ENCODE measurements at regions of chr5 and their contacts with region 1.

Region 1: GRCh38 chr5:127290946-127291693 is 524 bp downstream of the MEGF10 start:
- DNase-seq: no peak
- ATAC-seq: no peak
- H3K4me3 Mint-ChIP-seq: no peak overlapping the region
- H3K27ac Mint-ChIP-seq: no peak overlapping the region
- H3K4me1 Mint-ChIP-seq: no peaks in the 10 kb centered on the region
- H3K27me3 Mint-ChIP-seq: peaks cover 62% of the 10 kb centered on the region

Region 2: GRCh38 chr5:127313847-127314473 is 22.8 kb after region 1 on chr5:
- CTCF ChIA-PET with region 1: interaction called, 14 read pairs
- POLR2A ChIA-PET with region 1: no interaction called
- DNase-seq: peak; percentile 71
- ATAC-seq: peak; percentile 85
- H3K4me3 Mint-ChIP-seq: no peak overlapping the region
- H3K27ac Mint-ChIP-seq: no peak overlapping the region
- H3K4me1 Mint-ChIP-seq: no peaks in the 10 kb centered on the region
- H3K27me3 Mint-ChIP-seq: peaks cover 26% of the 10 kb centered on the region

Region 3: DNA sequence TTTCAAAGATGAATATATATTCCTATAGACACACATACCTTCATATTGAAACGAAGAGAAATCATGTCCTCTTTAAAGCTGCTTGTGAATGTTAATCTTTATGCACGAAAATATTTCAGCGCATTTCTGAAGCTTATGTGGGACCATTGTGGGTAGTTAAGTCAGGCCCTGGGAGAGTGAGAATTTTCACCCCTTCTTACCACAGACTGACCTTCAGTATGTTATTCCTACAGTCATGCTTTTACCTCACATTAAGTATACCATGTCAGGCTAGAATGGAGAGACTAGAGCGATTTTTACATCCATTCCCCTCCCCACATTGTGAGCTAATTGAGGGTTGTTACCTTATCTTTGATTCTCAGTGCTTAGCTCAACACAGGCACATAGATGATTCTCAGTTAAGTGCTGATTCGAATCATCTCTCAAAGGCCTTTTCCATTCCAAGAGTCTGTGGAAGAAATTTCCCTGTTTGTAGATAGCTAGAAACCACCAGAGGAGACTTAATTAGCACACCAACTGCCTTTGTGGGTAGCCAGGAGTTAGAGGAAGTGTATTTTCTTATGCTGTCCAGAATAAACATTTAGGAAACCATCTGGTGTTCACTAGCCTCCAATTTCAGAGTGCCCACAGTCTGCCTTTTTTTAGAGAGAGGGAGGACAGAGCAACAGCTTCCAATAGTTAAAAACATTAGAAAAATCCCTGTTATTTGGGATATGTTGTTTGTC is 110.0 kb after region 1 on chr5:
- CTCF ChIA-PET with region 1: no interaction called
- POLR2A ChIA-PET with region 1: no interaction called
- DNase-seq: no peak
- ATAC-seq: no peak
- H3K4me3 Mint-ChIP-seq: no peak overlapping the region
- H3K27ac Mint-ChIP-seq: no peak overlapping the region
- H3K4me1 Mint-ChIP-seq: no peaks in the 10 kb centered on the region
- H3K27me3 Mint-ChIP-seq: peaks cover 9% of the 10 kb centered on the region

Measured in activated CD8-positive, alpha-beta T cell treated with anti-CD3 and anti-CD28 coated beads, Interleukin-2, amount 10 ng/mL, durations not matched to agents 7 days and 5 days (primary cell).